ENCODE measurements at regions of chr12 and their contacts with region 1.

Region 1: DNA sequence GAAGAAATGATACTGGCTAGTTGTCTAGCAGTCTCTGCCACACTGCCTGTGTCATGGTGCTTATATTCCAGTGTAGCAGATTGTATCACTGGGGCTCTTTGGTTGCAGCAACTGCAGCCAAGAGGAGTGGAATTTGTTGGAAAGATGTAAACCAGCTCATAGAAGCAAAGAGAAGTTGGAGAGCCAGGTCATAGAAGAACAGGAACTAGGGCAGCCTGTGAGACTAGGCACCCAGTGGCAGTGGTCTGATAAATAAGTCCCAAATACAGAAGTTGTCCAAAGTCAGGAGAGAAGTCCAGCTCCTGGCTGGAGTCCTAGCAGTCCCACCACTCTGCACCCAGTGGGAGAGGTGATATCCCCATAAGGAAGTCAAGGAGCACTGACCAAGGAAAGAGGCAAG is 172.5 kb upstream of the ARID2 start:
- DNase-seq: no peak
- ATAC-seq: peak; percentile 56
- H3K4me3 ChIP-seq: no peak overlapping the region
- H3K4me3 Mint-ChIP-seq: no peak overlapping the region
- H3K27ac ChIP-seq: no peak overlapping the region
- H3K27ac Mint-ChIP-seq: no peak overlapping the region
- H3K4me1 ChIP-seq: no peaks in the 10 kb centered on the region
- H3K4me1 Mint-ChIP-seq: no peaks in the 10 kb centered on the region
- H3K27me3 ChIP-seq: no peaks in the 10 kb centered on the region
- H3K27me3 Mint-ChIP-seq: peaks cover 0 to 8% (median 0%) of the 10 kb centered on the region in 5 donors

Region 2: DNA sequence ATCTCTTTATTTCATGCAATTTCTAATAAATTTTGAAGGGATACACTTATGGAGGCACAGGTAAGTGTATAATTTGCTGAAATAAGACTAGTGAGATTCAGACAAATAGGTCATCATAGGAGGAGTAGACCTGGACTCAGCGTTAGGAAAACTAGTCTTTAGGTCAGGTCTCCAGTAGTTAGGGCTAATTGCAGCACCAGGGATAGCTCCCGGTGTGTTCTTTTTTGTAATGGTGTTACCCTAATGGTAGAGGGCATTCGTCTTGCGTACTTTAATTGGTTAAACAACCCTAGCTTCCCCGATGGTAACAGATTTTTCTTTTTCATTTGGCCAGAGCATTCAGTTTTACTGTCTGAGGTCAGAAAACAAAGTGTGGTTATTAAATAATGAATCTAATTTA is 237.4 kb after region 1 on chr12:
- CTCF ChIA-PET with region 1: no interaction called
- POLR2A ChIA-PET with region 1: no interaction called
- intact Hi-C with region 1: loop called in 1 of 2 experiments (anchors 2 kb)
- DNase-seq: no peak
- ATAC-seq: no peak
- H3K4me3 ChIP-seq: no peak overlapping the region
- H3K4me3 Mint-ChIP-seq: no peak overlapping the region
- H3K27ac ChIP-seq: no peak overlapping the region
- H3K27ac Mint-ChIP-seq: no peak overlapping the region
- H3K4me1 ChIP-seq: no peaks in the 10 kb centered on the region
- H3K4me1 Mint-ChIP-seq: peaks cover 0 to 36% (median 28%) of the 10 kb centered on the region in 7 donors
- H3K27me3 ChIP-seq: no peaks in the 10 kb centered on the region
- H3K27me3 Mint-ChIP-seq: no peaks in the 10 kb centered on the region